Aorta (tissue), 5 donors: ENCODE measurements at regions of chr9 and their contacts with region 1.

Region 1: DNA sequence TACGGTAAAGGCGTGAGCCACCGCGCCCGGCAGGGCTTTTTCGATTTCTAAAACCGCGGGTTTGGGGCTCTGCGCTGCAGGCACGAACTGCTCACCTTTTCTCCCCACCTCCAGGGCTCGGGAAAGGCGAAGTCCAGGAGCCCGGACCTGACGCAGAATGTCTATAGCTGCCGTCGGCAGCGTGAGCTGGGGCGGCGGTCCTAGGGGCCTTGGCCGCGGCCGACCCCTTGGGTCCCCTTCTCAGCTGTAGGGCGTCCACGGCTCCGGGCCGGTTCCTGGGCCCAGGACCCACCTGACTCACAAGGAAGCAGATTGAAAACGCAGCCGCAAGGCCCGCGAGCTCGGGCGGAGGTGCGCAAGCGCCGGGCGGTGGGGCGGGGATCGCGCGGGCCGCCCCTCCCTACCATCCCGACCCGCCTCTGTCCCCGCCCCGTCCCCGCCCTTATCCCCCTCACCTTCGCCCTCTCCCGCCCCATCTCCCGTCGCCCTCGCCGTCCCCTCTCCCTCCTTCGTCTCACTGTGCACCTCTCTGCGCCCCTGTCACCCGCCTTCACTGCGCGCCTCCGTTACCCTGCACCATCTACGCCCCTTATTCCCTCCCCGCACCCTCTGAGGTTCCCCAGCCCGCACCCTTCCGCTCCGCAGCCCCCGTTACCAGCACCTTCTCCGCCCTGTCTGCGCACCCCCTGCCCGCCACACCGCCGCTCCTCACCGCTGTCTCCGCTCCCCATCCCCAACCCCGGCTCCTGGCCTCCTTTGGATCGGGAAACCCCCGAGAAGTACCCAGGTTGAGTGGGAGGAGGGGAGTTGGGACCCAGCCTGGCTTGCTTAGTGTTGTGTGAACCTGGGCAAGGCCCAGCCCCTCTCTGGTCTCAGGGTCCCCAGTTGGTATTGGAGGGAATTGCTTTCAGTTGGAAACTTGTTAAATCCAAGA is at the start of gene HDHD3:
- DNase-seq: peak; percentile 88 to 92
- ATAC-seq: peak; percentile 92
- H3K4me3 ChIP-seq: peak within 1 kb of the TSS; percentile 22 to 98
- H3K27ac ChIP-seq: peak within 1 kb of the TSS in 1 of 2 donors; percentile 66
- H3K4me1 ChIP-seq: peaks cover 0 to 2% of the 10 kb centered on the region in 2 donors
- H3K27me3 ChIP-seq: no peaks in the 10 kb centered on the region
- total RNA-seq, gene HDHD3: 8.2 to 13.5 TPM

Region 2: GRCh38 chr9:113317777-113318176 is 59.1 kb before region 1 on chr9:
- intact Hi-C with region 1: loop called in 1 of 2 experiments (anchors 10 kb)
- DNase-seq: no peak
- ATAC-seq: no peak
- H3K4me3 ChIP-seq: no peak overlapping the region
- H3K27ac ChIP-seq: no peak overlapping the region
- H3K4me1 ChIP-seq: peaks cover 0 to 2% of the 10 kb centered on the region in 2 donors
- H3K27me3 ChIP-seq: no peaks in the 10 kb centered on the region

Region 3: DNA sequence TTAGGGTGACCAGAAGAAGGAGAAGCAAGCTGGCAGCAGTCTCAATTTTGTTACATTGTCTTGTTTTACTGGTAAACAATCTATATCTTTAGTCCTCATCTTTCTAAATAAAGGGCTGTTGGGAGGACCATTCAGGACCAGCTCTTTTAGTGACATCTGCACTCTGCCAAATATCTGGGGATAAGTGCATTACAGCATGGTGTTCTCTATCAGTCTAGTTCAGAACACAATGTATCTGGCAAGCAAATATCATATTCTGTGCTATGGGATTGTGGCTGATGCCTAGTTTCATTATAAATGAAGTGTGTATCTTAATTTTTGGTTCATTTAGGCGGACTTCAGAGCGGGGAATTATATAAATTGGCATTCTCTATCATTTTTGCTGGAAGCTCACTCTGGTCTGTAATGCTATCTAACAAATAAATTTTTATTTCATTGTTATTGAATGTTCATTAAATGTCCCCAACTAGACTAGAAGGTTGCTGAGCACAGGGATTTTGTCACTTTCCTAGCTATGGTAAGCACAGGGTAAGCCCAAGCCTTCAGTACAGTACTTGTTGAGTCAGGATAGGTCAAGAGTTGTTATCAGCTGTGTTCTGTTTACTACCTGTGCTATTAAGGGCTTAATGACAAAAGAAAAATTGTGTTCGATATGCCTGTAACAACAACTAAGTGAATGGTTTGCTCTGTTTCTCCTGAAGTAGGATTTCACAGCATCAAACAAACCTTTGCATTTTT is 48.7 kb before region 1 on chr9:
- intact Hi-C with region 1: no loop called
- DNase-seq: no peak
- ATAC-seq: no peak
- H3K4me3 ChIP-seq: no peak overlapping the region
- H3K27ac ChIP-seq: no peak overlapping the region
- H3K4me1 ChIP-seq: no peaks in the 10 kb centered on the region
- H3K27me3 ChIP-seq: no peaks in the 10 kb centered on the region

Region 4: GRCh38 chr9:113340017-113340699 is 36.7 kb before region 1 on chr9 and contains the start of gene WDR31:
- intact Hi-C with region 1: loop called in 1 of 2 experiments (anchors 5 kb)
- DNase-seq: peak; percentile 91 to 95
- ATAC-seq: peak; percentile 95
- H3K4me3 ChIP-seq: peak within 1 kb of the TSS; percentile 38 to 50
- H3K27ac ChIP-seq: no peak within 1 kb of the TSS
- H3K4me1 ChIP-seq: peaks cover 0 to 2% of the 10 kb centered on the region in 2 donors
- H3K27me3 ChIP-seq: no peaks in the 10 kb centered on the region
- total RNA-seq, gene WDR31: 1.1 to 2.1 TPM

Region 5: DNA sequence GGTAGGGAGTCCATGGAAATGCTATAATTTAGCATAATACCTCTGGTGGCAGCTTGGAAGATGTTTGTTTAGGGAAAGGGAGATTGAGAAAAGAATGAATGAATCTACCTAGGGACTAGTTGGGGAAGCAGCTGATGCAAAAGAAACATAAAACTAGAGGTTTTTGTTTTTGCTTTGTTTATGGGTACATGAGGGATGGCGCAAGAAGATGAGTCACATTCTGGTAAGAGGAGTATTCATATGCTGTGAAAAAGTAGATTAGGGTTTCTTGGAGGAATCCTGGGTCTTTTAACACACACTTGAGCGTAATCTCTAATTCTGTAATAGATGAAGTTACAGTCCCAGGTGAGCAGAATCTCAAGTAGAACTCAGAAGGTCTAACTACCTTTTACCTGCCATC is 50.7 kb after region 1 on chr9:
- intact Hi-C with region 1: no loop called
- DNase-seq: no peak
- ATAC-seq: no peak
- H3K4me3 ChIP-seq: no peak overlapping the region
- H3K27ac ChIP-seq: no peak overlapping the region
- H3K4me1 ChIP-seq: no peaks in the 10 kb centered on the region
- H3K27me3 ChIP-seq: no peaks in the 10 kb centered on the region

Region 6: DNA sequence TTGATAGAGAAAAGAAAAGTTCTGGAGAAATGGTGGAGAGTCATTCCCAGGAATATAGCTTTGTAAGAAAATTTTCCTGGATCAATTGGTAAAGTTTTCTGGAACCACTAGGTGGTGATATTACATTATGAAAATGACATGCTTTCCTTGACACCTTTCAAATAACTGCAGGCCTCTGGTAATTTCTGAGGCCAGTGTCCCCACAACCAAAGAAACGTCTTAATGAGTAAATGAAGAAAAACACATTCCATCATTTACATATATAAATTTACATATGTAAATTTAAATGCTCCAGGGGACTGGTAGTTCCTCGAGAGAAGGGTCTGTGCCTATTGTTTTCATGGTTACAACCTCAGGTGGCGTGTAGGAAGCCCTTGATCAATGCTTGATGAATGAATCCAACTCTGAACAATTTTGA is 69.4 kb after region 1 on chr9:
- intact Hi-C with region 1: no loop called
- DNase-seq: no peak
- ATAC-seq: no peak
- H3K4me3 ChIP-seq: no peak overlapping the region
- H3K27ac ChIP-seq: peak overlapping the region in 1 of 2 donors; percentile 44
- H3K4me1 ChIP-seq: no peaks in the 10 kb centered on the region
- H3K27me3 ChIP-seq: no peaks in the 10 kb centered on the region